Ascending aorta (tissue), 2 donors: ENCODE measurements at regions of chr3 and their contacts with region 1.

Region 1: DNA sequence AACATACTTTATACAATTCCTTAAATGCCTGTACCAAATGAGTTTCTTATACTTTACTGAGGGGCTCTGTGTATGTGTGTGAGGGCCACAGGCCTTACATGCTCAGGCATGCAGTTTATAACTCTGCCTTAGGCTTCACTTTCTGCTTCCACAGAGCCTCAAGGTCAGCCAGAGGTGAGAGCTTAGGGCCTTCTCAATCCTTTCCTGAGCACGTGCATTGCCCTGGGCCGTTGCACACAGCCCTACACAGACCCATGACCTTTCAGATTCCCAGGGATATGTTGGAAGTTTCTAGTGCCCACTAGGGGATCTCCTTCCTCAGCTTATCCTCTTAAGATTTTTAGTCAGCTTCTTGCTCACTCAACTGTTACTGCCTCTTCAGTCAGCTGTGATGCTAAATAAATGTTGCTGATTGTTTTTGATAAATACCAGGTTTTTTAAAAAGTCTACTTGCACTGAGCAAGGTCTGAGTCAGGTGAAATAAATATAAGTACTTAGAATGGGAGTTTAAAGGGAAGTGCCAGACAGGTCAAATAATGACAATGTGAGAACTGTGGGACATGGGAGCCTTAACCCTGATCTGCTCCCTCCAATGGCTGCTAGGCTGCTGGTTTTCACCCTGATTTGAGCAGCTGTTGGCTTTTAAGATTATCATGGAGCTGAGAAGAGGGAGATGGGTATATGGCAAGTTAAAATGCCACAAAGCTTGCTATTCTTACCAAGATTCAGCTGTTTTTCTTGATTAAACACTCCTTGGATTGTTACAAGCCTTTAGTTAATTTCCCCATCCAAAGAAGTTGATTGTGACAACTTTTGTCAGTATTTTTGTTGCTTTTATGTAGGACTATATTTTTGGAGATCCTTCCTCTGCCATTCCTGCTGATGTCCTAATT is 169.5 kb downstream of the PLD1 start:
- DNase-seq: no peak
- H3K4me3 ChIP-seq: no peak overlapping the region
- H3K27ac ChIP-seq: no peak overlapping the region
- H3K4me1 ChIP-seq: no peaks in the 10 kb centered on the region
- H3K27me3 ChIP-seq: no peaks in the 10 kb centered on the region
- CTCF ChIP-seq: no peak

Region 2: DNA sequence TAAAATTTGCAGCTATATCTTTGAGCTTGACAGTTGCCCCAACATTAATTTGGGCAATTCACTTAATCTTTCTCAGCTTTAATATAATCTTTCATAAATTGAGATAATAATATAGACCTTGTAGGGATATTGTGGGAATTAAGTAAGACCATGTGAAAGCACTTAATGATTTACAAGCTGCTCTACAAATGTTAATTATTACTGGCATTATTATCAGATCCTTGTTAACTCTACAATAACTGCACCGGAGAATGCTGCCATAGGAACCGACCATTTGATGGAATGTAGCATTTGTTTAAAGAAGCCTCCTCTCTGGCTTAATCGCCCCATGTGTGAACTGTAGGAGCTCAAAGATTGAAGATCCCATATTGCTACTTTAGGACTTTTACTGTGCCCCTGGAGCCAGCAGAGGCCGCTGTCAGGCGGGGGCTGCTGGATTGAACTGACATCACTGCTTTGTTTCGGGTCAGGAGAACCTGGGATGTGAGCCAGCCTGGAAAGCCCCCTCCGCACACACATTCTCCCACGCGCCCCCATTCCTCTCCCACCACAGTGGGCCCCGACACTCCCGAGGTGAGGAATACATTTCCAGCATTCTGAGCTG is 26.3 kb before region 1 on chr3:
- intact Hi-C with region 1: no loop called
- DNase-seq: no peak
- H3K4me3 ChIP-seq: no peak overlapping the region
- H3K27ac ChIP-seq: no peak overlapping the region
- H3K4me1 ChIP-seq: no peaks in the 10 kb centered on the region
- H3K27me3 ChIP-seq: no peaks in the 10 kb centered on the region
- CTCF ChIP-seq: peak in 2 of 3 experiments; percentile 23 to 44

Region 3: DNA sequence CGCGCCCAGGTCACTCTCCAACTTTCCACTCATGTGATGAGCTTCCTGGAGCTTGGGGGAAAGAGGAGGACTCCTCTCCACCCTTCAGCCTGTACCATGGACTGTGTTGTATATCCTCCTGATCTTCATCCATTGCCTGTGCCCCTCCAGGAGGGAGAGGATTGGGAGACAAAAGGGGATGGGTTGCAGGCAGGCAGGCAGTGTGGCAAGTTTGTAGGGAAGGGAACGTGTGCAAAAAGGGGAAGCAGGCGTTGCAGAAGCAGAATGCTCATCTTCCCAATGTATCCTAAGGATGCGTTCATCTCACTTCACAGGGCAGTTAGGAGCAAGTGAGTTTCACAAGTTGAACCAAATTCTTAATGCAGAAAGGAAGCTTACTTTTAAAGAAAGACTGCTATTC is 835.6 kb after region 1 on chr3:
- intact Hi-C with region 1: loop called (anchors 5 kb)
- DNase-seq: no peak
- H3K4me3 ChIP-seq: peak overlapping the region; percentile 48 to 57
- H3K27ac ChIP-seq: no peak overlapping the region
- H3K4me1 ChIP-seq: no peaks in the 10 kb centered on the region
- H3K27me3 ChIP-seq: no peaks in the 10 kb centered on the region
- CTCF ChIP-seq: no peak